Activated CD8-positive, alpha-beta T cell treated with anti-CD3 and anti-CD28 coated beads, Interleukin-2, amount 10 ng/mL, durations not matched to agents 7 days and 5 days (primary cell): ENCODE measurements at regions of chr6 and their contacts with region 1.

Region 1: GRCh38 chr6:24933868-24934401 is 1.8 kb downstream of the RIPOR2 start:
- DNase-seq: peak; percentile 69
- ATAC-seq: peak; percentile 25
- H3K4me3 Mint-ChIP-seq: peak overlapping the region; percentile 94
- H3K27ac Mint-ChIP-seq: peak overlapping the region; percentile 89
- H3K4me1 Mint-ChIP-seq: peaks cover 66% of the 10 kb centered on the region
- H3K27me3 Mint-ChIP-seq: no peaks in the 10 kb centered on the region

Region 2: DNA sequence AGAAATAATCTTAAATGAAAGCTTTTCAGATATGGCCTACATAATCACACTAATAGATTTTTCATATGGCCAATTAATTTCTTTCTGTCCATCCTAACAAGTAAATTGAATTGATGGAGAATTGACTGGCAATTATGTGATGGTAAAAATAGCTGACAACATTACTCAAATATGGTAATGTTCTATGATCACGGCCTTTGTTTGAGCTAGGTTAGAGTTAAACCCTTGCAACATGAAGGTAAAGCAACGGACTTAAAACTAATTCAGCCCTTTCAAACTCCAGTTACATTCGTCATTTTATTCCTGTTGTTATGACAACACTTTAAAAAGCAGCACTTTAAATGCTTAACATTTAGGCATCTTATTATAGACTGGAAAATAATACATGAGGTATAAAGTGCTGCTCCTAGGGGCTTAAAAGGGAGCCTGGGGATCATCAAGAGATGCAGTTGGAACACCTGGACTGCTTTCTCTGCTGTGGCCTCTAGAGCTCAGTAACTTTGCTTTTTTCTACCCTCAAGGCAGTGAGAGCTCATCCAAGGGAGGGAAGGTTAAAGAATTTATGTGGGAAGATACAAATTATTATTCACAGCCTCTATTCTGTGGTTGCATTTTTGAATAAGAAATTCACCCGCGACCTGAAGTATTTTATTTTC is 45.1 kb before region 1 on chr6:
- CTCF ChIA-PET with region 1: interaction called, 26 read pairs
- POLR2A ChIA-PET with region 1: interaction called, 3 read pairs
- DNase-seq: no peak
- ATAC-seq: no peak
- H3K4me3 Mint-ChIP-seq: no peak overlapping the region
- H3K27ac Mint-ChIP-seq: peak overlapping the region; percentile 44
- H3K4me1 Mint-ChIP-seq: peaks cover 72% of the 10 kb centered on the region
- H3K27me3 Mint-ChIP-seq: no peaks in the 10 kb centered on the region

Region 3: DNA sequence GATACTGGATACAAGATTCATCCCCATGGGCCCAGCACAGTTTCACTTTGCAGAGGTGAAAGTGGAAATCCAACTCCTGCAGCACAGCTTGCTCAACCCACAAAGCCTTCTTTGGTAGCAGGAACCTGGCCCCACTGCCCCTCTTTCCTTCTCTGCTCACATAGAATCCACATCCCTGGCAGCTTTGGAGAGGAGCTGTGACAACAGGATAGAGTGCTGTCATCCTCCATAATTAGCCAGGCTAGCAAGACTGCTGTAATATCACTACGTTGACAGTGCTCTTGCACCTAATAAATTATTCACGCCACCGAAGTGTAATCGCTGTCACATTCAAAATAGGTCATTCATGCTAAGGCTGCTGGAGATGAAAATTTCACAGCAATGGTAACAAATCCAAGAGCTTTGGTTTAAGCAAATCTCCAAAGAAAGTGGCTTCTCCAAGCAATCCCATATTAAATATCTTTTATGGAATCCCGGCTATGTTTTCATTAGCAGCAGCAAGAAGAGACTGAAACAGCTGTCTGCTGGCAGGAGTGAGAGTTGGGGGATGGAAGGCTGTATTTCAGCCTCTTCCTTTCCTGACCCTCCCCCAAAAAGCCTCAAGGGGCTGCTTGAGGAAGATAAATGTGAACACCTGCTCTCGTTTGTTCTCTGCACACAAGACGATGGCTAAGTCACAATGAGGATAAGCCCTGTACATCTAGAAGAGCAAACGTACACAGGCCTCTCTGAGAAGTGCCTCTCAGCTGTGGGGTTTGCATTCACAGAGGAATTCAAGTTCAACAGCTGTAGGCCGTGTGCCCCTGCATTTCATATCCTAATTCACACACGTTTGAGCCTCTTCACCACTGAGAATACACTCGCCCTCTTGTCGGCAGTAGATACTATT is 14.7 kb before region 1 on chr6:
- CTCF ChIA-PET with region 1: interaction called, 198 read pairs
- POLR2A ChIA-PET with region 1: interaction called, 33 read pairs
- DNase-seq: peak; percentile 44
- ATAC-seq: peak; percentile 50
- H3K4me3 Mint-ChIP-seq: peak overlapping the region; percentile 53
- H3K27ac Mint-ChIP-seq: peak overlapping the region; percentile 62
- H3K4me1 Mint-ChIP-seq: peaks cover 86% of the 10 kb centered on the region
- H3K27me3 Mint-ChIP-seq: no peaks in the 10 kb centered on the region

Region 4: DNA sequence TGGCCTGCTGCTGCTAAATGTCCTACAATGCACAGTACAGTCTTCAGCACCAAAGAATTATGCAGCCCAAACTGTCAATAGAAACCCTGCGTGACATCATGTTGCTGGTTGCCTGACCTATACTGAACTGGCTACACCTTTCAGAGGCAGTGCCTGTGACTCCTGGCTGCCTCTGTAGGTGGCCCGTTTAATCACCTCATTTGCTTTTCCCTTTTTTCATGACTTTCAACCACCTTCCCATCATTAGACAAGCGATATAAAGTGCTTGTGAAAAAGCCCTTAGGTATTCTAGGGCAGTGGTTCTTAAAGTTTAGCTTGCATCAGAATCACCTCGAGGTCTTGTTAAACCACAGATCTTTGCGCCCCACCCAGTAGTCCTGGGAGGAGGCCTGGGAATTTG is 34.9 kb after region 1 on chr6:
- CTCF ChIA-PET with region 1: interaction called, 40 read pairs
- POLR2A ChIA-PET with region 1: interaction called, 6 read pairs
- DNase-seq: no peak
- ATAC-seq: no peak
- H3K4me3 Mint-ChIP-seq: no peak overlapping the region
- H3K27ac Mint-ChIP-seq: no peak overlapping the region
- H3K4me1 Mint-ChIP-seq: peaks cover 21% of the 10 kb centered on the region
- H3K27me3 Mint-ChIP-seq: no peaks in the 10 kb centered on the region

Region 5: GRCh38 chr6:24991810-24992467 is 58.0 kb after region 1 on chr6:
- CTCF ChIA-PET with region 1: interaction called, 433 read pairs
- POLR2A ChIA-PET with region 1: interaction called, 55 read pairs
- DNase-seq: peak; percentile 86
- ATAC-seq: peak; percentile 95
- H3K4me3 Mint-ChIP-seq: no peak overlapping the region
- H3K27ac Mint-ChIP-seq: peak overlapping the region; percentile 75
- H3K4me1 Mint-ChIP-seq: peaks cover 46% of the 10 kb centered on the region
- H3K27me3 Mint-ChIP-seq: no peaks in the 10 kb centered on the region

Region 6: GRCh38 chr6:25027221-25027916 is 93.4 kb after region 1 on chr6:
- CTCF ChIA-PET with region 1: interaction called, 29 read pairs
- POLR2A ChIA-PET with region 1: no interaction called
- DNase-seq: peak; percentile 88
- ATAC-seq: peak; percentile 97
- H3K4me3 Mint-ChIP-seq: peak overlapping the region; percentile 65
- H3K27ac Mint-ChIP-seq: peak overlapping the region; percentile 81
- H3K4me1 Mint-ChIP-seq: peaks cover 48% of the 10 kb centered on the region
- H3K27me3 Mint-ChIP-seq: no peaks in the 10 kb centered on the region

Region 7: DNA sequence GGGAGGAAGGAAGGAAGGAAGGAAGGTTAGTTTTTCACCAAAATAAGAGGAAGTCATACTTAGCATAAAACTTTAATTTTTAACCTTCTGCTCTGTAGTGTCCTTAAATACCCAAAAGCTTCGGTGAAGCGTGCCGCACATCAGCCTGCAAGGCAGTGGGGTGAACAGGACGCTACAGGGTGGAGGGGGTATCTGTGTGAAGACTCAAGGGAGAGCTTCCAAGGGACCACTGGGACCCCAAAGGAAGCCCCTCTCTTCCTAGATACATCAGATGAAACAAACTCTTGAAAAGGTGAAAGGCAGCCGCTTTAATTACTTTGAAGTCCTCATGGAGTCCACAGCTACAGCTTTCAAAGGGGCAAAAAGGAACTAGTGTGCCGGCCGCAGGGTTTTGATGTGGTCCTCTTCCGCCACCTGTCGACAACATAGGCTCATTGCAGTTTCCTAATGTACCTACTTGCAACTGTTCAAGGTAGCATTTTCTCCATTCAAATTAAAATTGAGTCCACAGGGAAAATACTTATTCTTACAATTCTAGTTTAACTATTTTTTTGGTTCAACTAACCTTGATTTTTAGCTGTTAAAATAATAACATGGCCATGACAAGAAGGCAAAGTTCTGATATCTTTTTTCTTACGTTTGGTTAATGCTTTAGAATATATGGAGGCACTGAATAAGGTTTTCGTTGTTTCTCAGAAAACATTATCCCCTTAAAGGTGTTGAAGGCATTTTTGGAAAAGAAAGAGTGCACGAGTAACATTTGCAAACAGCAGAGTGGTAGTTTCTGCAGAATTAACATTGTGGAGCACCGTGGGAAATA is 136.8 kb after region 1 on chr6:
- CTCF ChIA-PET with region 1: interaction called, 25 read pairs
- POLR2A ChIA-PET with region 1: no interaction called
- DNase-seq: peak; percentile 90
- ATAC-seq: peak; percentile 95
- H3K4me3 Mint-ChIP-seq: peak overlapping the region; percentile 53
- H3K27ac Mint-ChIP-seq: peak overlapping the region; percentile 91
- H3K4me1 Mint-ChIP-seq: peaks cover 7% of the 10 kb centered on the region
- H3K27me3 Mint-ChIP-seq: peaks cover 3% of the 10 kb centered on the region